Right ventricle myocardium superior (tissue), 1 donor: ENCODE measurements at regions of chrX and their contacts with region 1.

Region 1: GRCh38 chrX:85111347-85111746 is 107.7 kb downstream of the APOOL start:
- DNase-seq: no peak
- ATAC-seq: no peak

Region 2: GRCh38 chrX:84729809-84730208 is 381.5 kb before region 1 on chrX:
- intact Hi-C with region 1: no loop called
- DNase-seq: no peak
- ATAC-seq: peak; percentile 80

Region 3: DNA sequence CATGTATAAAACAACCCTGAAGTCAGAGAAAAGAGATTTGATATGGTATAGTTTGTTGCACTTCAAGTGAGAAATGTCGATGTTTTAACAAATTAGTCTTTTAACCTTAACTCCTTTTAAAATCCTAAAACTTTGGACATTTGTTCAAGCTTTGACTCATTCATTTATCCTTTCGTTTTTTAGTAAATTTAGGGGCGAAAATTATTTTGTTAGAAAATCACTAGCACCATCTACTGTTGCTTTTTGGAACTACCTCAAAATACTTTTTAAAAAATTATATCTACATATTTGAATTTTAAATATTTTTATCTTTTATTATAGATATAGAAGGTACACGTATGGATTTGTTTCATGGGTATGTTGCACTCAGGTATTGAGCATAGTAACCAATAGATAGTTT is 433.3 kb after region 1 on chrX:
- intact Hi-C with region 1: loop called (anchors 10 kb)
- DNase-seq: no peak
- ATAC-seq: no peak